ENCODE measurements at regions of chr1 and their contacts with region 1.

Region 1: DNA sequence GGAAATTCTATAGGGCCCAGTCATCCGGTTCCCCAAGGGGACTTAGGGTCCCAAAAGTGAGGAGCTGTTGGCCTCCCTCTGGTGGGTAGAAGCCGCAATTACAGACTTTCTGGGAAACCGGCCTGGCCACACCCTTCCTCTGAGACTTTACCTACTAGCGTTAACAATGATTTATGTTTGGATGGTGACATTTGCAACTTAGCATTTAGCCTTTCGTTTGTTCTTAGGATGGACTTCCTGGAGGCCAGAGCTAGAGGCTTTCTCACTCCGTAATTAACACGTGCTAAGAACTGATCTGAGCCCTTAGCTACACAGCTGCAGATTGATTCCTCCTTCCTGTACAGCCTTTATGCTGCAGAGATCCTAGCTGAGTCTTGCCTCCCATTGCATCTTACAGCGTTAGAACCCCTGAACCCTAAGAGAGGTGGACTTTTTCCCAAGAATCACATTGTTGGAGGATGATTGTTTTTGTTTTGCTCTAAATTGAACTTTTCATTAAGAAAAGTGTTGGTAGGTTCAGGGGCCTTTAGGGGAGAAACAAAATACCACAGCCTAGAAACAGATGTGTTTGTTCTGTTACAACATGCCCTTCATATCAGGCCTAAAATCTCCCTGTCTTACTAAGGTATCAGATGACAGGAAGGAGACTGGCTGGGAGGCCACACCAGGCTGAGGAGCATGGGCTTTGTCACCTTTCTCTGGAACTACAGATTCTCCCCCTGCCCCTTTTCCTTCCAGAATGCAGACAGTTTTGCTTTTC is 2.0 kb downstream of the S100A11 start:
- DNase-seq: peak in 8 of 9 donors; percentile 60 to 78 (median 74)
- ATAC-seq: peak; percentile 82
- H3K4me3 ChIP-seq: peak overlapping the region; percentile 70
- H3K4me3 Mint-ChIP-seq: peak overlapping the region; percentile 88 to 99 (median 96)
- H3K27ac ChIP-seq: peak overlapping the region; percentile 81
- H3K27ac Mint-ChIP-seq: peak overlapping the region; percentile 95 to 100 (median 98)
- H3K4me1 ChIP-seq: peaks cover 21 to 22% of the 10 kb centered on the region in 2 donors
- H3K4me1 Mint-ChIP-seq: peaks cover 26 to 60% (median 41%) of the 10 kb centered on the region in 7 donors
- H3K27me3 ChIP-seq: no peaks in the 10 kb centered on the region
- H3K27me3 Mint-ChIP-seq: no peaks in the 10 kb centered on the region

Region 2: GRCh38 chr1:151934048-151934493 is 100.8 kb before region 1 on chr1:
- CTCF ChIA-PET with region 1: no interaction called
- POLR2A ChIA-PET with region 1: no interaction called
- intact Hi-C with region 1: loop called in 1 of 2 experiments (anchors 1 kb)
- DNase-seq: peak in 7 of 9 donors; percentile 31 to 69 (median 59)
- ATAC-seq: peak; percentile 94
- H3K4me3 ChIP-seq: no peak overlapping the region
- H3K4me3 Mint-ChIP-seq: peak overlapping the region in 1 of 10 donors; percentile 49
- H3K27ac ChIP-seq: no peak overlapping the region
- H3K27ac Mint-ChIP-seq: peak overlapping the region in 1 of 9 donors; percentile 41
- H3K4me1 ChIP-seq: no peaks in the 10 kb centered on the region
- H3K4me1 Mint-ChIP-seq: peaks cover 0 to 6% (median 4%) of the 10 kb centered on the region in 7 donors
- H3K27me3 ChIP-seq: no peaks in the 10 kb centered on the region
- H3K27me3 Mint-ChIP-seq: peaks cover 0 to 33% (median 0%) of the 10 kb centered on the region in 5 donors

Region 3: GRCh38 chr1:151968058-151968457 is 66.8 kb before region 1 on chr1:
- CTCF ChIA-PET with region 1: interaction called, 3 read pairs
- POLR2A ChIA-PET with region 1: no interaction called
- intact Hi-C with region 1: loop called in 1 of 2 experiments (anchors 1 kb)
- DNase-seq: peak in 8 of 9 donors; percentile 39 to 76 (median 68)
- ATAC-seq: peak; percentile 93
- H3K4me3 ChIP-seq: no peak overlapping the region
- H3K4me3 Mint-ChIP-seq: no peak overlapping the region
- H3K27ac ChIP-seq: no peak overlapping the region
- H3K27ac Mint-ChIP-seq: no peak overlapping the region
- H3K4me1 ChIP-seq: peaks cover 4 to 5% of the 10 kb centered on the region in 2 donors
- H3K4me1 Mint-ChIP-seq: peaks cover 5 to 20% (median 7%) of the 10 kb centered on the region in 7 donors
- H3K27me3 ChIP-seq: no peaks in the 10 kb centered on the region
- H3K27me3 Mint-ChIP-seq: peaks cover 0 to 20% (median 0%) of the 10 kb centered on the region in 5 donors

Region 4: GRCh38 chr1:152013664-152014237 is 21.1 kb before region 1 on chr1:
- CTCF ChIA-PET with region 1: interaction called, 3 read pairs
- POLR2A ChIA-PET with region 1: no interaction called
- intact Hi-C with region 1: loop called in 1 of 2 experiments (anchors 2 kb)
- DNase-seq: peak in 2 of 9 donors; percentile 19 to 43
- ATAC-seq: peak; percentile 42
- H3K4me3 ChIP-seq: no peak overlapping the region
- H3K4me3 Mint-ChIP-seq: no peak overlapping the region
- H3K27ac ChIP-seq: no peak overlapping the region
- H3K27ac Mint-ChIP-seq: no peak overlapping the region
- H3K4me1 ChIP-seq: no peaks in the 10 kb centered on the region
- H3K4me1 Mint-ChIP-seq: peaks cover 0 to 6% (median 4%) of the 10 kb centered on the region in 7 donors
- H3K27me3 ChIP-seq: no peaks in the 10 kb centered on the region
- H3K27me3 Mint-ChIP-seq: peaks cover 0 to 58% (median 9%) of the 10 kb centered on the region in 5 donors

Region 5: DNA sequence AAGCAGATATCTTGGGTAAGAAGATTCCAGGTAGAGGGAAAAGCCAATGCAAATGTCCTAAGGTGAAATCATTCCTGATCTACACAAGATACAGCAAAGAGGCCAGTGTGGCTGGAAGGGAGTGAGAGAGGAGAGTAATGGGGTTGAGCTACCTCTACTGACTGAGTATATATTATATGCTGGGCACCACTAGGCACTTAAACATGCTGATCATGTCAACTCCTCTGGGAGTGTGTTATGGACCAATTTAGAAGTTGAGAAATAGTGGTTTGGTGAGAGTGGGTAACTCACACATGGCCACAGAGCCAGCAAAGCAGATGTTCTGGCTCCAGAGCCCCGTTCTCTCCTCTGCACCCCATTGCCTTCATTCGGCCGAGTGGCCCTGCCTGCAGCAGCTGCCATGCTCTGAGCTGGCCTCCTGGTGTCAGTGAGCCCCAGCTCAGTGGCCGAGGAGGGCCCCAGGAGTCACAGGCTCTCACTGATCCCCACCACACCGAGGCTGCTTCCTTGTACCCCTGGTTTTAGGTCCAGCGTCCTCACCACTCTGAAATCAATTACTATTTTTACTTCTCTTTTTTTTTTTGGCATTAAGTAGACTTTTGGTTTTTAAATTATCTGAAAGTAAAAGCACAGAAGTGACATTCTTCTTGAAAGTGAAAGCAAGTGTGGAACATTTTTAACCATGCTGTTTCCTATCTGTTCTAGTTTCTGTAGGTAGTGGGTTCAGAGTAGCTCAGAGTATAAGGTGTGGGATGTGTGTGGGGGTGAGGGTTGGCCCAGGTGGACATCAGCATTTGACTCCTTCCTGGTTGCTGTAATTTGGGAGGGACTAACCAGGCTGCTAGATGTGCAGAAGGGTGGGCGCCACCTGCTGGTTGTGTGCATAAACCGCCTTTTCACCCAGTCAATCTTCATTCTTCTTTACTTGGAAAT is 425.0 kb after region 1 on chr1:
- CTCF ChIA-PET with region 1: interaction called, 3 read pairs
- POLR2A ChIA-PET with region 1: no interaction called
- intact Hi-C with region 1: loop called in 1 of 2 experiments (anchors 5 kb)
- DNase-seq: peak; percentile 34 to 74 (median 63)
- ATAC-seq: peak; percentile 83
- H3K4me3 ChIP-seq: peak overlapping the region; percentile 39
- H3K4me3 Mint-ChIP-seq: peak overlapping the region; percentile 61 to 85 (median 74)
- H3K27ac ChIP-seq: peak overlapping the region; percentile 12
- H3K27ac Mint-ChIP-seq: peak overlapping the region; percentile 63 to 93 (median 86)
- H3K4me1 ChIP-seq: peaks cover 5 to 10% of the 10 kb centered on the region in 2 donors
- H3K4me1 Mint-ChIP-seq: peaks cover 22 to 30% (median 27%) of the 10 kb centered on the region in 7 donors
- H3K27me3 ChIP-seq: no peaks in the 10 kb centered on the region
- H3K27me3 Mint-ChIP-seq: peaks cover 0 to 9% (median 0%) of the 10 kb centered on the region in 5 donors

Region 6: GRCh38 chr1:152786077-152786476 is 751.3 kb after region 1 on chr1 and contains the start of gene LCE1E:
- CTCF ChIA-PET with region 1: no interaction called
- POLR2A ChIA-PET with region 1: no interaction called
- intact Hi-C with region 1: no loop called
- DNase-seq: no peak
- ATAC-seq: no peak
- H3K4me3 ChIP-seq: no peak within 1 kb of the TSS
- H3K4me3 Mint-ChIP-seq: no peak within 1 kb of the TSS
- H3K27ac ChIP-seq: no peak within 1 kb of the TSS
- H3K27ac Mint-ChIP-seq: no peak within 1 kb of the TSS
- H3K4me1 ChIP-seq: no peaks in the 10 kb centered on the region
- H3K4me1 Mint-ChIP-seq: no peaks in the 10 kb centered on the region
- H3K27me3 ChIP-seq: peaks cover 0 to 3% of the 10 kb centered on the region in 2 donors
- H3K27me3 Mint-ChIP-seq: peaks cover 13 to 77% (median 51%) of the 10 kb centered on the region in 5 donors
- total RNA-seq, gene LCE1E: not detected

Measured in naive thymus-derived CD4-positive, alpha-beta T cell (primary cell).